ENCODE measurements at regions of chr11 and their contacts with region 1.

Region 1: DNA sequence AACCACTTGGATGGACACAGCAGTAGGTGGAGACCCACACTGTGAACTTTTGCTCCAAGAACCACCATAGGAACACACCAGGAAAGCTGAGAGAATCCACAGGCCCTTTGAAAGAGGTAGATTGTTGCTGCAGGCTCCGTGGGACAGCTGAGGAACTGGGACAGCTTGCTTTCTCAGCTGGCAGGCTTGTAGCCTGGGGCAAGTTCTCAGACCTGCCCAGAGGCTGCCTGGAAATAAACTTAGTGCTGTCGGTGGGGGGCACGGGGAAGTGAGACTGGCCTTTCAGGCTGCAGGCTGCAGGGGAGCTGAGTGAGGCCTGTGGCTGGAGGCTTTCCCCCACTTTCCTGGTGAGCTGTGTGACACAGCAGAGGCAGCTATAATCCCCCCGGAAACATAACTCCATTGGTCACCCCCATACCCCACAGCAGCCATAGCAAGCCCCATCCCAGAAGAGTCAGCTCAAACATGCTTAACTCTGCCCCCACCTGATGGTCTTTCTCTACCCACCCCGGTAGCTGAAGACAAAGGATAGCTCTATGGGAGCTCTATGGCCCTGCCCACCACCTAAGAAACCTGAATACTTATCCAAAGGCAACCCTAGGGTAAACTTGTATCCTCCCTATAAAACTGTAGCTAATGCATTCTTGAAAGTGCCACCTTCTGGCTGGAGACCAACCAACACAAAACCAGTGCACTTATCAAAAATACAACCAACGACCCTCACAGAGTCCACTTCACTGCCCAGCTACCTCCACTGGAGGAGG is 21.4 kb upstream of the ACRV1 start:
- DNase-seq: no peak
- H3K4me3 ChIP-seq: no peak overlapping the region
- H3K27ac ChIP-seq: no peak overlapping the region
- H3K4me1 ChIP-seq: peaks cover 0 to 4% (median 0%) of the 10 kb centered on the region in 4 experiments; a peak in 4 of 7 replicates
- H3K27me3 ChIP-seq: no peaks in the 10 kb centered on the region
- CTCF ChIP-seq: no peak
- EP300 ChIP-seq: no peak
- POLR2A ChIP-seq: no peak
- RAD21 ChIP-seq: no peak

Region 2: GRCh38 chr11:125637840-125638239 is 64.2 kb before region 1 on chr11:
- CTCF ChIA-PET with region 1: no interaction called
- POLR2A ChIA-PET with region 1: no interaction called
- DNase-seq: no peak
- H3K4me3 ChIP-seq: no peak overlapping the region
- H3K27ac ChIP-seq: no peak overlapping the region
- H3K4me1 ChIP-seq: no peaks in the 10 kb centered on the region
- H3K27me3 ChIP-seq: no peaks in the 10 kb centered on the region
- CTCF ChIP-seq: peak in 1 of 3 experiments; percentile 14; a peak in 1 of 4 replicates
- EP300 ChIP-seq: no peak
- POLR2A ChIP-seq: no peak
- RAD21 ChIP-seq: peak in 1 of 2 experiments; percentile 10; a peak in 1 of 4 replicates

Region 3: GRCh38 chr11:125649465-125650166 is 52.4 kb before region 1 on chr11:
- CTCF ChIA-PET with region 1: no interaction called
- POLR2A ChIA-PET with region 1: no interaction called
- DNase-seq: no peak
- H3K4me3 ChIP-seq: no peak overlapping the region
- H3K27ac ChIP-seq: no peak overlapping the region
- H3K4me1 ChIP-seq: no peaks in the 10 kb centered on the region
- H3K27me3 ChIP-seq: no peaks in the 10 kb centered on the region
- CTCF ChIP-seq: no peak
- EP300 ChIP-seq: no peak
- POLR2A ChIP-seq: no peak
- RAD21 ChIP-seq: no peak

Region 4: DNA sequence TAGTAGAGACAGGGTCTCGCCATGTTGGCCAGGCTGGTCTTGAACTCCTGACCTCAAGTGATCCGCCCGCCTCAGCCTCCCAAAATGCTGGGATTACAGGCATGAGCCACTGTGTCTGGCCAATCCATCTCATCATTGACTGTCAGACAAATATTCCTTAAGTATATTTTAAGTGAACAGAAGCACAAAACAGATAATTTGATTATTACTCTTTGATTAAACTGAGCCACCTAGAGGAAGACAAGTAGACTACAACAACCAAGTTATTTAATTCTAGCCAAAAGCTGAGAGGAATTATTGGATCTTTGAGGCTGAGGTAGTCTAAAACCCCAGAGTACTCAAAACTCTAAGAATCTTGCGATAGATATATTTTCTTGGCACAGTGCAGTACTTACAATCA is 22.6 kb before region 1 on chr11:
- CTCF ChIA-PET with region 1: interaction called, 11 read pairs
- POLR2A ChIA-PET with region 1: no interaction called
- DNase-seq: no peak
- H3K4me3 ChIP-seq: no peak overlapping the region
- H3K27ac ChIP-seq: no peak overlapping the region
- H3K4me1 ChIP-seq: no peaks in the 10 kb centered on the region
- H3K27me3 ChIP-seq: no peaks in the 10 kb centered on the region
- CTCF ChIP-seq: no peak
- EP300 ChIP-seq: no peak
- POLR2A ChIP-seq: no peak
- RAD21 ChIP-seq: no peak

Region 5: GRCh38 chr11:125743681-125744080 is 41.6 kb after region 1 on chr11:
- CTCF ChIA-PET with region 1: no interaction called
- POLR2A ChIA-PET with region 1: no interaction called
- DNase-seq: no peak
- H3K4me3 ChIP-seq: no peak overlapping the region
- H3K27ac ChIP-seq: no peak overlapping the region
- H3K4me1 ChIP-seq: no peaks in the 10 kb centered on the region
- H3K27me3 ChIP-seq: no peaks in the 10 kb centered on the region
- CTCF ChIP-seq: no peak
- EP300 ChIP-seq: no peak
- POLR2A ChIP-seq: no peak
- RAD21 ChIP-seq: no peak

Measured in H1 (cell line).